A549 (cell line): ENCODE measurements at regions of chr11 and their contacts with region 1.

Region 1: DNA sequence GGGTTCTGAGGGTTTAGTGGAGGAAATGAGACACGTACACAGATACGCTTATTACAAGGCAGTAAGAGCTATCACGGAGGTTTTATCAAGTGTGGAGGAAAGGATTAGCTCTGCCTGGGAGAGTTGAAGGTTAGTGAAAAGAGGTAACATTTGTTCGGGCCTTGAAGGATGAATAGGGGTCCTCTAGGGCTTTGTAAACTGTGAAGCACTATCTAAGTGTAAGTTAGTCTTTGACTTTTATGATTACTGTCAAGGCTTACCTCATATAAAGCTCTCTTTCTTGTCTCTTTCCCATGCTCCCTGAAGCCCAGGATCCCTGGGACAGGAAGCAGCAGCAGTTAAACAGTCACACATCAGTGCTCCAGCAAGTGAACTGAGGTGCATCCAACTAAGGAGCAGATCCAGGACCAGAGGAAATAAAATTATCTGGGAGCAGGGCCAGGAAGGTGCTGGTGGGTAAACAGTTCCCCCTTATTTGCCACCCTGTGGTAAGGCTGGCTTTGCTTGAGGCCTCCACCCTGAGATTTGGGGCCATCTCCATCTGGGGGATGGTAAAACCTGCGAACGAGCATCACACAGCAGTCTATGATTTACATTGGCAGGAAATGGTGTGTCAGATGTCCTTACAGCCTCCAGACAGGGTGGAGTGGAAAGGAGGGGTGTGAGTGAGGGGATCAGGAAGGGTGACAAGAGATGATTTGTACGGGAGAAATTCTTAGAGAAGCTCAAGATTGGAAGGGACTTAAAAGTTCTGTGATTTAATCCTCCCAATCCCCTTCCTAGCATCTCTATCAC is 27.2 kb downstream of the GVQW3 start:
- DNase-seq: no peak
- ATAC-seq: no peak
- H3K4me3 ChIP-seq: no peak overlapping the region
- H3K27ac ChIP-seq: no peak overlapping the region
- H3K4me1 ChIP-seq: no peaks in the 10 kb centered on the region
- CTCF ChIP-seq: no peak
- EP300 ChIP-seq: no peak
- POLR2A ChIP-seq: no peak
- RAD21 ChIP-seq: no peak

Region 2: DNA sequence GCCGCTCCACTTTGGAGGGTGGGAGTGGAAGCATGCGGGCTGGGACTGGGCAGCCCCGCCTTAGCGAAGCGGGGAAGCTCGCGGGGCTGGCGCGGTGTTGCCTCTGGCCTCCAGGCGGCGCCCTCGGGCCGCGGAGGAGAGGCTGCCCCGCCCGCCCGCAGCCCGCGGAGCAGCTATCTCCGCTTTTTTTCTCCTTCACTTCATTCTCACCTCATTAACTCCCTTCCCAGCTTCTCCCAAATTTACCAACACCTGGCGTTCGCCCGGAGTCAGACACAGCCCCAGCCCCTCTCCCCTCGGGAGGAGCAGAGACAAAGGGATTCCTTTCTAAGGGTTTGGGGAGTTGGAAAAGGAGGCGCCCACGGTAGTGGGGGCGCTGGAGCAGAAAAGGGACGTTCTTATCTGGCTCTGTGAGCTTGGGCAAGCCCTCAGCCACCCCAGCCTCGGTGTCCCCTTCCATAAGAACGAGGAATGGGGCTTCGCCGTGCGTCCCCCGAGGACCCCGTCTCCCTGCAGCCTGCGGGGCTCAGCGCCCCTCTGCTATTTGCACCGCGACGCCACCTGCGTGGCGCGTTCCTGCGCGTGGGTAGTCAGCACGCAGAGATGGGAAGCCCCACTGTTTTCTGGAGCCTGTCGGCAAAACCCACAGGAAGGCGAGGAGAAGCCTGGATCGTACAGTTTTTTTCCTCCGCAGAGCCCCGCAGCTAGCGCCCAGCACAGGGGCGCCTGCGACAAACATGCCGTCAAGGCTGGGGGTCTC is 200.5 kb before region 1 on chr11:
- CTCF ChIA-PET with region 1: no interaction called
- POLR2A ChIA-PET with region 1: no interaction called
- DNase-seq: peak; percentile 85 to 89
- ATAC-seq: peak; percentile 52 to 79
- H3K4me3 ChIP-seq: peak overlapping the region; percentile 60
- H3K27ac ChIP-seq: peak overlapping the region; percentile 70 to 85; a peak in 5 of 6 replicates
- H3K4me1 ChIP-seq: 0 out of 3 replicates have a peak, but pooled peaks cover 9% of the 10 kb centered on the region
- CTCF ChIP-seq: peak; percentile 99
- EP300 ChIP-seq: no peak
- POLR2A ChIP-seq: no peak
- RAD21 ChIP-seq: peak; percentile 79 to 95

Region 3: DNA sequence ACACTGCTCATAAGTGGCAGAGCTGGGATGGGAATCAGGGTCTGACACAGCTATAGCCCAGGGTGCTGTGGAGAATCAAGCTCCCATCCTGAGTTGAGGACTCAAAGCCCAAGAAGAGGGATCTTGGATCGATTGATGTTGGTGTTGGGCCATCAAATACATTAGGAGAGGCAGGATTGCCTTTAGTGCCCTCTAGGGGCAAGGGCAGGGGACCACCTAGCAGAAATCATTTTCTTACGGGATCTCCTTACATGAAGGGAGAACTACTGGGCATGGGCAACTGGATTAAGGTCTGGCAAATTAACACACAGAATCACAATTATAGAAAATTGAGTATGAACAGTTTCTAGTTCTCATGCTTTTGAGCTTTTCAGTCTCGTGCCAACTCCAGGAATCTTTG is 11.5 kb after region 1 on chr11:
- CTCF ChIA-PET with region 1: interaction called, 11 read pairs
- POLR2A ChIA-PET with region 1: no interaction called
- DNase-seq: peak; percentile 30 to 60
- ATAC-seq: peak; percentile 50 to 83; a peak in 3 of 6 replicates
- H3K4me3 ChIP-seq: no peak overlapping the region
- H3K27ac ChIP-seq: no peak overlapping the region
- H3K4me1 ChIP-seq: no peaks in the 10 kb centered on the region
- CTCF ChIP-seq: peak; percentile 35
- EP300 ChIP-seq: no peak
- POLR2A ChIP-seq: no peak
- RAD21 ChIP-seq: peak in 1 of 2 experiments; percentile 39; a peak in 1 of 5 replicates